GM12878 (cell line): ENCODE measurements at regions of chr6 and their contacts with region 1.

Region 1: DNA sequence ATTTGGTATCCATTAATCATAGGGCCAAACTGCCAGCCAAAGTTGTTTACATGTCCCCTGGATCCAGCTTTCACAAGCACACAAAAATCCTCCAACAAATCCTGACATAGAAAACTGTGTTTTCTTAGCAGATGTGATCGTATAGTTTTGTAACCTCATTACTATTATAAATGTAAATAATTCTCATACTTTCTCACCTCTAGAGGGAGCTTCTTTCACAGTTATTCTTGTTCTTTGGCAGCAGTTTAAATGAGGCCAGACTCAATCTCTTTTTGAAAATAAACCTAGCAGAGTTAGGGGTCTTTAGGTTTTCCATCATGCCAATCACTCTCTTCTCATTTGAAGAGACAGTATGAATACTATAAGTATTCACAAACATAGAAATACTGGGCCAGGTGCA is 17.0 kb upstream of the ZNF318 start:
- DNase-seq: no peak
- ATAC-seq: no peak
- H3K4me3 ChIP-seq: no peak overlapping the region
- H3K27ac ChIP-seq: peak overlapping the region; percentile 86; the same call in 1 of the 2 replicates
- H3K4me1 ChIP-seq: peaks cover 41% of the 10 kb centered on the region
- H3K27me3 ChIP-seq: no peaks in the 10 kb centered on the region
- CTCF ChIP-seq: peak; percentile 20 to 47 (median 39); a peak in 4 of 6 replicates
- EP300 ChIP-seq: no peak
- POLR2A ChIP-seq: no peak
- RAD21 ChIP-seq: peak; percentile 54; the same call in 1 of the 2 replicates

Region 2: DNA sequence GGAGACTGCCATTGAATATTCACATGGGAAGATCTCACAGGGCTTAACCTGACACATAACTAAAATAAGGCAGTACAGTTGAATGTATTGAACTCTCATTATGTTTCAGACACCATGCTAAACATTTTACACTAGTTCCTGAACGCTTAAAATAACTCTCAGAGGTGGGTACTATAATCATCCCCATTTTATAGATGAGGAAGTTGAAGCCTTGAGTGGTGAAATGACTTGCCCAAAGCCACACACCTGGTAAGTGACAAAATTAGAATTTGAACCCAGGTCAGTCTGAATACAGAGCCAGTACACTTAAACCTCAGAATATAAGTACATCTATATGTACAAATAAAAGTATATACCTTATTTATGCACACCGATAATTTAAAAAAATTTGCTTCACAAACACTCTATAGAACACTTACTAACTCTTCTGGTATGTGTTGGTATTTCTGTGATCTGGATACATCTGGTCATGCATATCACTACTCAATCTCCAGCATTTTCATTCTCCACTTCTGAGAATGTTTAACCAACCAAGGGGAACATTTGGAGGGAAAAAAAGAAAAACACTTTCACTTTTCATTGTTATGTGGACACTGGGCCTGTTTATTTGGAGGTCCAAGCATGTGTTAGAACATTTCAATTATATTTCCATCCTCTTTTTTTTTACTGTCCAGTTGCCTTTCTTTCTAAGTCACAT is 609.2 kb before region 1 on chr6:
- CTCF ChIA-PET with region 1: no interaction called
- POLR2A ChIA-PET with region 1: interaction called, 3 read pairs
- RAD21 ChIA-PET with region 1: no interaction called
- SMC1A ChIA-PET with region 1: no interaction called
- in situ Hi-C with region 1: no loop called
- intact Hi-C with region 1: loop called (anchors 10 kb)
- DNase-seq: peak; percentile 83
- ATAC-seq: peak; percentile 63
- H3K4me3 ChIP-seq: 0 out of 2 replicates have a peak overlapping the region, but pooled peaks have one; percentile 18
- H3K27ac ChIP-seq: peak overlapping the region; percentile 99
- H3K4me1 ChIP-seq: peaks cover 71% of the 10 kb centered on the region
- H3K27me3 ChIP-seq: no peaks in the 10 kb centered on the region
- CTCF ChIP-seq: no peak
- EP300 ChIP-seq: peak in 1 of 2 experiments; percentile 41; a peak in 2 of 4 replicates
- POLR2A ChIP-seq: no peak
- RAD21 ChIP-seq: no peak

Region 3: DNA sequence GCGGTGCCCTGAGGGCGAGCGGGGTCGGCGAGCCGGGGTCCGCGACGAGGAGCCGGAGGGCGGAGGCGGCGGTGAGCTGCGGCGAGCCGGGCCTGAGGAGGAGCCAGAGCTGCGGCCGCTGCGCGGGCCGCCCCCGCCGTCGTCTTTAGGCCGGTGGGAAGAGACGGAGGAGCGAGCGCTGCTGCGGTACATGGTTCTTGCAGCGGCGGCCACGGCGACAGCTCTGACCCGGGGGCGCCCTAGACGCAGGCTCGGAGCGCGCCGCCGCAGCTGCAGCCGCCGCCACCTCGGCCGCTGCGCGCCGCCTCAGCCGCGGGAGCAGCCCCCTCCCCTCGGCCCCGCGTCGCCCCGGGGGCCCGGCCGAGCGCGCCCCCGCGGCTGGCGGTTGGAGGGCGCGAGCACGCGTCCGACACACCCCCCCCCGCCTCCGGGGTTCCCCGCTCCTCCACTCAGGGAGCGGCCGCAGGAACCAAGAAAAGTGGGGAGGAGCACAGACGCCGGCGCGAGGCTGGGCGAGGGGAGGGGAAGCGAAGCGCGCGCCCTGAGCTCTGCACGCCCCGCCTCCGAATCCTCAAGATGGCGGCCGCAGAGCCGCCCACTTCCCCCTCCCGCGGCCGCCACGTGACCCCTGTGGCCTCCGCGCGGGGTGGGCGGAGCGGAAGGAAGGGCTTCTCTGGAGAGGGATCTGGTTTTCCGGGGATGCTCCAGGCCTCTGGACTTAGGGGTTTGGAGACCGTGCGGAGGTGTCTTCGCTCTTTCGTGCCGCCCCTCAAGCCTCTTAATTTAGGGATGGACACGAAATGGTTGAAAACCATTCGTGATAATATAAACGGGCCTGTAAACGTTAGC is 17.1 kb before region 1 on chr6 and contains the start of gene ZNF318:
- CTCF ChIA-PET with region 1: interaction called, 68 read pairs
- POLR2A ChIA-PET with region 1: interaction called, 218 read pairs
- RAD21 ChIA-PET with region 1: interaction called, 311 read pairs
- SMC1A ChIA-PET with region 1: interaction called, 616 read pairs
- in situ Hi-C with region 1: no loop called
- intact Hi-C with region 1: loop called (anchors 1 kb)
- DNase-seq: peak; percentile 82
- ATAC-seq: peak; percentile 83
- H3K4me3 ChIP-seq: peak within 1 kb of the TSS; percentile 84
- H3K27ac ChIP-seq: peak within 1 kb of the TSS; percentile 89
- H3K4me1 ChIP-seq: peaks cover 26% of the 10 kb centered on the region
- H3K27me3 ChIP-seq: no peaks in the 10 kb centered on the region
- CTCF ChIP-seq: no peak
- EP300 ChIP-seq: peak in 1 of 2 experiments; percentile 47; a peak in 2 of 4 replicates
- POLR2A ChIP-seq: peak; percentile 82
- RAD21 ChIP-seq: no peak
- polyA plus RNA-seq, gene ZNF318: 4.8 to 6.3 TPM

Region 4: GRCh38 chr6:43396407-43397149 is 10.1 kb after region 1 on chr6:
- CTCF ChIA-PET with region 1: interaction called, 26 read pairs
- POLR2A ChIA-PET with region 1: interaction called, 25 read pairs
- RAD21 ChIA-PET with region 1: interaction called, 13 read pairs
- SMC1A ChIA-PET with region 1: interaction called, 39 read pairs
- in situ Hi-C with region 1: no loop called
- intact Hi-C with region 1: no loop called
- DNase-seq: no peak
- ATAC-seq: no peak
- H3K4me3 ChIP-seq: no peak overlapping the region
- H3K27ac ChIP-seq: no peak overlapping the region
- H3K4me1 ChIP-seq: peaks cover 6% of the 10 kb centered on the region; the same call in 1 of the 2 replicates
- H3K27me3 ChIP-seq: no peaks in the 10 kb centered on the region
- CTCF ChIP-seq: no peak
- EP300 ChIP-seq: no peak
- POLR2A ChIP-seq: no peak
- RAD21 ChIP-seq: no peak

Region 5: GRCh38 chr6:43402820-43403219 is 16.3 kb after region 1 on chr6:
- CTCF ChIA-PET with region 1: interaction called, 20 read pairs
- POLR2A ChIA-PET with region 1: interaction called, 8 read pairs
- RAD21 ChIA-PET with region 1: interaction called, 11 read pairs
- SMC1A ChIA-PET with region 1: interaction called, 20 read pairs
- in situ Hi-C with region 1: no loop called
- intact Hi-C with region 1: no loop called
- DNase-seq: no peak
- ATAC-seq: no peak
- H3K4me3 ChIP-seq: no peak overlapping the region
- H3K27ac ChIP-seq: no peak overlapping the region
- H3K4me1 ChIP-seq: no peaks in the 10 kb centered on the region
- H3K27me3 ChIP-seq: no peaks in the 10 kb centered on the region
- CTCF ChIP-seq: no peak
- EP300 ChIP-seq: no peak
- POLR2A ChIP-seq: no peak
- RAD21 ChIP-seq: no peak